Dendritic cell treated with granulocyte-macrophage colony-stimulating factor and Interleukin-4, amounts not matched to agents 40 ng/mL and 50 ng/mL, for 4 days (primary cell): ENCODE measurements at regions of chr2 and their contacts with region 1.

Region 1: DNA sequence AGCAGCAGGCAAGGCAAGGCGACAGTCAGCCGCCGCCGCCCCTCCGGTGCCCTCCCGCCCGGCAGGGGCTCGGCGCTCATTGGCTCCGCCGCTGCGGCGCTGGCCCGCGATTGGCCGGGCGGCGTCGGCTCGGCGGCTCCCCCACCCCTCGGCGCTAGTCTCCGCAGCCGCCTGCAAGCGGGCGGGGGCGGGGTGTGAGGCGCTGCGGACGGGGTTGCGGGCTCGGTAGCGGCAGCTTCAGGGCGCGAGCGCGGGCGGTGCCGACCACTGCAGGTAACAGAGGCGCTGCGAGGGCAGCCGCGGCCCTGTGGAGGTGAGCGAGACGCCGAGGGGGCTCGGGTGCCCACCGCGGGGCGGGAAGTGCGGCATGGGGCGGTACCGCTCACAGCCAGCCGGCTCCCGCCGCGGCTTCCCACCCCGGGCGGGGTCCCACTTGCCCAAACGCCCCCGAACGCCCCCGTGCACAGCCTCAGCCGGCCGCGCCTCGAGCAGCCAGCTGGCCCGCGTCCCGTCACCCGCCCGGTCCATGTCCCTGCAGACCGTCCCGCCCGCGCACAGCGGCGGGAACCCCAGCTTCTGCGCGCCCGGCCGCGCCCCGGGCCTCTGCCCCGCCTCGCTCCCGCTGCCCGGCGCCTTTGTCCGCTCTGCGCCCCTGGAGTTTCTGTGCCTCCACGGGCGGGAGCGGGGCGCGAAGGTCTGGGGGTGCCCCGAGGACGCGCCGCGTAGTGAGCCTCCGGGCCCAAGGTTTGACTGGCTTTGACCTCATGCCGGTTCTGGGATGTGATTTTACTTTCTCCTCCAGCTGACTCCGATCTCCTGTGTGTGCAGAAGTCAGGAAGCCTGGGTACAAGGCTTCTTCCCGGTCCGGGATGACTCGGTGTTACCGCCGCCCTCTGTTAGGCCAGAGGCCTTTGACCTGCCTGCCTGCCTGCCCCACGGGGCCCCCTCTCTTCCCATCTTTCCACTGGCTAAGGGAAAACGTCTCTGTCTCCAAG is at the start of gene SANBR:
- H3K4me3 Mint-ChIP-seq: peak within 1 kb of the TSS; percentile 91
- H3K27ac Mint-ChIP-seq: peak within 1 kb of the TSS; percentile 84
- H3K4me1 Mint-ChIP-seq: peaks cover 10% of the 10 kb centered on the region
- H3K27me3 Mint-ChIP-seq: no peaks in the 10 kb centered on the region

Region 2: DNA sequence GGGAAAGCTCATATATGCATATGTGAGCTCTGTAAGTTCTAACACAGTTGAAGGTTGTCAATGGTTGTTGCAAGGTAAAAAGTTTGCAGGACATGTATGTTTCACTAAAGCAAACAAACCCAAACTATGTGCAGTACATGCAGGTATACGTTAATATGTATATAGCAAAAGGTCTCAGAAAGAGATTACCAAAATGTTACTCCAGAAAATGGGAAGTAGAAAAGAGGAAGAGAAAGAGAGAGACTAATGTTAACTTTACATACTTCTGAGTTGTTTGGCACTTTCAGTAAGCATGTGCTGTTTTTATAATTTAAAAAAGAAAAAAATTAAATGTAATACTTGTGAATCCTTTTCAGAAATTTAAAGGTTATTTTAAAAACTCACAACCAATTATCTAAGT is 81.3 kb before region 1 on chr2:
- intact Hi-C with region 1: no loop called
- H3K4me3 Mint-ChIP-seq: no peak overlapping the region
- H3K27ac Mint-ChIP-seq: no peak overlapping the region
- H3K4me1 Mint-ChIP-seq: peaks cover 22% of the 10 kb centered on the region
- H3K27me3 Mint-ChIP-seq: no peaks in the 10 kb centered on the region

Region 3: DNA sequence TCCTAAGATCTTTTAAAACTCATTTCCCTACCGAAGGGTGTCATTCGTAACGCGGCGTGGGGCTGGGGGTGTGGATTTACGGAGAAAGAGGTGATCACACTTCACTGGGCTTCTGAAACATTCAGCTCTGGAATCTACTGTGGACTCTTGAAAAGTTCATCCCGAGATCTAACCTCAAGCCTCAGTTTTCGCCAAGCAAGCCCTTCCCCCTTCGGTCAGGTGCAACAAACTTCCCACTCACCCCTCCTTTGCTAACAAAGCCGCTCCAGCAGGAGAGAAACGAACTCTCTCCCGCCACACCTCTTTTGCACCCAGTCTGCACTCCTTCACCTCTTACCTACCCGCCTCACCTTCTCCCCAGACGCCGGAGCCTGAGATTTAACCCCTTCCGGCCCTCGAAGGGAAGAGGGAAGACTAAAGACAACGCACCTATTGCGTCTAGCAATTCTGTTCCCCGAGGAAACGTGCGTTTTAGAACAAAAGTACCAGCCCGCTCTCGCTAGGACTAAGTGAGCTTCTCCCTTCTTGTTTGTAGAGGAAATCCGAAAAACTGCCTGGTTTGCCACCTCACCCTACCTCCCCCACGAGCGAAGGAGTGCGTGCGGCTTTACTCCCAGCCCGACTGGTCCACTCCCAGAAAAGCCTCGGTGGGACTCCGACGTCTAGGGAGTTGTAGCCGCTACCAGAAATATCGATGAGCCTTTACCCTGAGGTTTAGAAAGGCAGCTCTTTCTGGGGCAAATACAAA is 49.0 kb before region 1 on chr2:
- intact Hi-C with region 1: loop called (anchors 5 kb)
- H3K4me3 Mint-ChIP-seq: peak overlapping the region; percentile 95
- H3K27ac Mint-ChIP-seq: peak overlapping the region; percentile 92
- H3K4me1 Mint-ChIP-seq: peaks cover 16% of the 10 kb centered on the region
- H3K27me3 Mint-ChIP-seq: no peaks in the 10 kb centered on the region

Region 4: DNA sequence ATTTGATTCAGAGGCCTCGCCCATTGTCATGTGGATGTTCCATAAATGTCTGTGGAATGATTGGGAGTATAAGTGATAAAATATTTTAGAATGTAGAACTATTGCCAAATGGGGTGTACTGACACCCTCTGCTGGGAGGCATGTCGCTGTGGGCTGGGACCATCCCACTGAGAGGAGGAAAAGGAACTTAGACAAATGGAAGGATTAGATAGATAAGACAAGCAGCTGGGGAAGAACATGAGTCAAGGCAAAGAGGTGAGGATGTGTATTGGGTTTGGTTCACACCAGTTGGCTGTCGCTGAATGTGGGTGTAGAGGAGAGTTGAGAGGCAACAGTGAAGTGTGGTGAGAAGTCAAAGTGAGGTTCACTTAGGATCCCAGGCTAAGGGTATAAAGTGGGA is 99.9 kb after region 1 on chr2:
- intact Hi-C with region 1: no loop called
- H3K4me3 Mint-ChIP-seq: no peak overlapping the region
- H3K27ac Mint-ChIP-seq: peak overlapping the region; percentile 4
- H3K4me1 Mint-ChIP-seq: peaks cover 30% of the 10 kb centered on the region
- H3K27me3 Mint-ChIP-seq: no peaks in the 10 kb centered on the region

Region 5: GRCh38 chr2:61176755-61177726 is 111.0 kb after region 1 on chr2:
- intact Hi-C with region 1: loop called (anchors 5 kb)
- H3K4me3 Mint-ChIP-seq: peak overlapping the region; percentile 91
- H3K27ac Mint-ChIP-seq: peak overlapping the region; percentile 93
- H3K4me1 Mint-ChIP-seq: peaks cover 88% of the 10 kb centered on the region
- H3K27me3 Mint-ChIP-seq: peaks cover 8% of the 10 kb centered on the region

Region 6: DNA sequence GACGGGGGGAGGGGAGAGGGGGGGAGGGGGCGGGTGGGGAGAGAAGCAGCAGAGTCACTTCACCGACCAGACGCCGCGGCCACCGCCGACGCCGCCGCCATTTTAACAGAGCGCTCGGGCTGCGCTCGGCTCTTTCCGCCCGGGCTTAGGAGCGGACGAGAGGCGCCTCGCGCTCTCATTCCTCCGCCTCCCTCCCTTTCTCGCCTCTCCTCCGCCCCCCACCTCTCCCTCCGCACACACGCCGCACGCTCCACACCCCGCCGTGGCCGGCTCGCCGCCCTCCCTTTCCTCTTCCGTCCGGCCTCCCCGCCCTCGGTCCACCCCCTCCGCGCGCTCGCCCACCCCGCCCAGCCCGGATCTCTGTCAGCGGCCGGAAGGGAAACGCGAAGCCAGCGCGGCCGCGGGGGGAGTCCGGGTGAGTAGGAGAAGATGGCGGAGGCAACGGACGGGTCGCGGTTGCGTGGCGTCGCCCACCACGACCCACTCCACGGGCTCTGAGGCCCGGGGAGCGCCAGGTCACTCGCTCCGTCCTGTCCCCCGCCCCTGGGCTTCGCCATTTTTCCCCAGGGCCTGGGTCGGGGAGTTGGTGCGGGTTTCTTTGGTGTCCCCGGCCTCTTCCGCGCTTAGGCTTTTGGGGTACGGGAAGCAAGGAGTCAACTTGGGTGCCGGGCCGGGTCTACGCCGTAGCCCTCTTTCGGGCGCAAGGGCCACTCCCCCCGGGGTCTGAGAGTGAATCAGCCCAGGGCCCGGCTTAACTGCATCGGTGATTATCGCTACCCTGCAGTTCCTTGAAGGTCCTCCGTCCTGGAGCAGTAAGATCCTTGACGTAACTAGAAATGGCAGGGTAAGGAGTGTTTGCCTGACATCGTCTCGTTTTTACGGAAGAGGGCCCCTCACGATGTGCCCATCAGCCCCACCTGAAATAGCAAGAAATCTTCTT is 405.2 kb after region 1 on chr2 and contains the start of gene USP34:
- intact Hi-C with region 1: loop called (anchors 5 kb)
- H3K4me3 Mint-ChIP-seq: peak within 1 kb of the TSS; percentile 92
- H3K27ac Mint-ChIP-seq: peak within 1 kb of the TSS; percentile 99
- H3K4me1 Mint-ChIP-seq: peaks cover 20% of the 10 kb centered on the region
- H3K27me3 Mint-ChIP-seq: no peaks in the 10 kb centered on the region